GM13976 (cell line): ENCODE measurements at regions of chr12 and their contacts with region 1.

Region 1: GRCh38 chr12:106282457-106283097 is 20.0 kb upstream of the TCP11L2 start:
- DNase-seq: peak; percentile 53
- CTCF ChIP-seq: peak; percentile 21

Region 2: GRCh38 chr12:105204916-105205315 is 1077.7 kb before region 1 on chr12:
- in situ Hi-C with region 1: no loop called
- DNase-seq: no peak
- CTCF ChIP-seq: no peak

Region 3: DNA sequence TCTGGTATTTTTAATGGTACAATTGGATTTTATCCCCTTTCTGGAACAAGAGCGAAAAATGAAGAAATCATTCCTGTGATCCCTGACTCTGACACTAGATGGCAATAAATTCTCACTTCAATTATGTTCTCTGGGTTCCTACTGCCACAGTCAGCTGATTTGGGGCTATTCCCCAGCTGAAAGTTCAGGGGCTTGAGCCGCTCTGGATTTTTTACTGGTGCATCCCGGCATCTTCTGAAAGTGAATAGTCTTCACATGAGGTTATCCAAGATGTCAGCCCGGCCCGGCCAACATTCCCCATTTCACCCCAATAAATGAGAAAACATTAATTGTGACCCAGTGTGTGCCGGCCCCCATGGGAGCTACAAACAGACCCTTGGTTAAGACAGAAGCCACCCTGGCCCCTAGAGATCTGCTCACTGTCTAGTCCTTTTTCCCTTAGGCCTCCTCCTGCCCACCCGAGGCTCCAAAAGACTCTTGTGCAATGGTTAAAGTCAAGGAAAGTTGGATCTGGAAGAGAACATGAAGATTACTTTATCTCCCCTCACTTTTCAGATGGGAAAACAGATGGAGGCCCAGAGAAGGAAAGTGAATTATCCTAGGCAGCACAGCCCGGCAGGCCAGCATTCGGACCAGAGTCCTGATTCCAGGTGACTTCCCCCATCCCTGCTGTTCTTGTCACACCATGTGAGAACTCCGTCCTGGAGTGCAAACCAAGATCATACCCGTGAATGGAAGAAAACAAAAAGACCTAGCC is 55.5 kb before region 1 on chr12:
- in situ Hi-C with region 1: loop called (anchors 5 kb)
- DNase-seq: peak; percentile 75
- CTCF ChIP-seq: peak; percentile 42